ENCODE measurements at regions of chr9 and their contacts with region 1.

Region 1: GRCh38 chr9:128702445-128702948 is at the start of gene PKN3:
- DNase-seq: peak; percentile 90 to 92
- ATAC-seq: peak; percentile 76 to 87 (median 82)
- H3K4me3 ChIP-seq: peak within 1 kb of the TSS; percentile 56 to 93 (median 78)
- H3K27ac ChIP-seq: peak within 1 kb of the TSS; percentile 70 to 96 (median 93)
- H3K4me1 ChIP-seq: peaks cover 0 to 24% (median 15%) of the 10 kb centered on the region in 9 donors
- H3K27me3 ChIP-seq: no peaks in the 10 kb centered on the region
- CTCF ChIP-seq: peak; percentile 87 to 96 (median 94)
- total RNA-seq, gene PKN3: 3.7 to 8.9 (median 4.7) TPM

Region 2: DNA sequence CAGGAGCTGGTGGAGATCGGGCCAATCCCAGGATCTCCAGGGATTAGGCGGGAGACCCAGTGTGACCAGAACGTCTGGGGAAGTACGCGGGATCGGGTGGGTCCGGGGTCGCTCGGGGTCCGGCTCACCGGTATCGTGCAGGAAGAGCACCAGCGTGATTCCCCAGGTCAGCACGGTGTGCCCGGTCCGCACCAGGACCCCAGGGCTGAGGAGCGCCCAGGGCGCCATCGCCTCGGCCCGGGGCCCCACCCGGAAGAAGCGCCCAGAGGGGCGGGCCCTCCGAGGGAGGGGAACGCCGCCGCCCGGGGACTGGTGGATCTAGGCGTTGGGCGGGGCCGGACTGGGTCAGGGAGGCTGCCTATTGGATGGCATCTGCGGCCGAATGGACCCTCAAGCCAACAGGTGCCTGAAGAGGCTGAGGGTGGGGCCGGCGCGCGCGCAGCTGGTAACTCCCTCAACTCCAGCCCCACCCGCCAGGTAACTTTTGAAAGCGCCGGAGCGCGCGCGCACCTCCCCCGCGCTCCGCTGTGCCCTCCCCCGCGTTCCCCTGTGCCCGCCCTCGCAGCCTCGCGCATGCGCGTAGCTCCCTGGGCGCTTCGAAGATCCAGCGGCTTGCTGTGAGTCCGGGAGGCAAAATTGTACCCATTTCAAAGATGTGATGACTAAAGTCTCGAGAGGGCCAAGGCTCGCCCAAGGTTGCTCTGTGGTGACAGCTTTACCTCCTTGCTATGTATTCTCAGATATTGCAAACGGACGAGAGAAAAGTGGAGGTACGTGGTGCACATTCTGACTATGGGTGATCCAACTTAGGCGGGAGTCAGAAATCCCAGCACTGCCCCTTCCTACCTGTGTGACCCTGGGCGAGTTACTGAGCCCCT is 21.6 kb after region 1 on chr9 and contains the start of gene ZDHHC12:
- intact Hi-C with region 1: loop called in 2 of 10 experiments (anchors 2 kb)
- DNase-seq: peak; percentile 94 to 95
- ATAC-seq: peak; percentile 92 to 95 (median 93)
- H3K4me3 ChIP-seq: peak within 1 kb of the TSS; percentile 27 to 81 (median 69)
- H3K27ac ChIP-seq: peak within 1 kb of the TSS in 9 of 10 donors; percentile 49 to 86 (median 71)
- H3K4me1 ChIP-seq: peaks cover 0 to 25% (median 9%) of the 10 kb centered on the region in 9 donors
- H3K27me3 ChIP-seq: no peaks in the 10 kb centered on the region
- CTCF ChIP-seq: no peak
- total RNA-seq, gene ZDHHC12: 4.1 to 22.5 (median 6.0) TPM

Region 3: GRCh38 chr9:128809832-128810231 is 107.3 kb after region 1 on chr9:
- intact Hi-C with region 1: no loop called
- DNase-seq: no peak
- ATAC-seq: peak in 4 of 8 donors; percentile 6 to 20 (median 16)
- H3K4me3 ChIP-seq: no peak overlapping the region
- H3K27ac ChIP-seq: no peak overlapping the region
- H3K4me1 ChIP-seq: no peaks in the 10 kb centered on the region
- H3K27me3 ChIP-seq: no peaks in the 10 kb centered on the region
- CTCF ChIP-seq: no peak